CD8-positive, alpha-beta T cell (primary cell): ENCODE measurements at regions of chr19 and their contacts with region 1.

Region 1: DNA sequence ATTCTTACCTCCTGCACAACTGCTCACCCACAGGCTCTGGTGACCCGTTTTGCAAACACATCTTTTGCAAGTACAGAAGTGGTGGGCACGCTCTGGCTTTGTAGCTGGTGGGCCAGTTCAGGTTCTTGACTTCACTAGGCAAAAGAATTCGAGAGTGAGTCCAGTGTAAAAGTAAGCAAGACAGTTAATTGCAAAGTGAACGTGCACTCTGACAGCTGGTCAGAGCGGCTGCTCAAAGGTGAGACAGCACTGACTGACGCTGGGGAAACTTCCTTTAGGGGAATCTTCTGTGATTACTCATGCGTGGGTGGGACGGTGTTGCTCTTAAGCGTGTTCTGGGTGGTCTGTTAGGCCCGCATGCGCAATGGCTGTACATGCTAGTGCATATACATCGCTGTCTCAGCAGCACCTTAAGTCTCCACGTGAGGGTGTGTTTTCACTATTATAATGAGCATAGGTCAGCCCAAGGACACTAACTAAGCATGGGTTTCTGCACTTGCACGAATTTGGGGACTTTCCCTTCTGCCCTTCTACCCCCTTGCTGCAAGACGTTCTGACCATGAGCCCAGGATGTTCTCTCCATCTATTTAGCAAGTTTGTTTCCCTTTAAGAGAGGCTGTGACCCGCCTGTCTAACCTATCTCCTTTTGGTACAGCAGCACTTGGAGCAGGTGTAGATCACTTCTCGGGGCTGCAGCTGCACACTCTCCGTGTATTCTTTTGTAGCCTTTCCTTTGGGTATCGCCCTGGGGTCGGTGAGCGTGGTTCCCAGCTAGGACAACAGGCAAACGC is 30.2 kb upstream of the CD33 start:
- DNase-seq: peak in 2 of 9 experiments; percentile 18 to 51
- ATAC-seq: peak; percentile 99
- H3K4me3 ChIP-seq: no peak overlapping the region
- H3K4me3 Mint-ChIP-seq: peak overlapping the region; percentile 39
- H3K27ac ChIP-seq: no peak overlapping the region
- H3K27ac Mint-ChIP-seq: peak overlapping the region; percentile 73
- H3K4me1 ChIP-seq: no peaks in the 10 kb centered on the region
- H3K4me1 Mint-ChIP-seq: no peaks in the 10 kb centered on the region
- H3K27me3 ChIP-seq: no peaks in the 10 kb centered on the region
- H3K27me3 Mint-ChIP-seq: peaks cover 4% of the 10 kb centered on the region
- CTCF ChIP-seq: no peak

Region 2: GRCh38 chr19:51441410-51442390 is 247.0 kb after region 1 on chr19:
- CTCF ChIA-PET with region 1: no interaction called
- POLR2A ChIA-PET with region 1: no interaction called
- intact Hi-C with region 1: no loop called
- DNase-seq: peak; percentile 56 to 95 (median 81)
- ATAC-seq: peak; percentile 91
- H3K4me3 ChIP-seq: peak overlapping the region; percentile 21 to 32
- H3K4me3 Mint-ChIP-seq: peak overlapping the region; percentile 75
- H3K27ac ChIP-seq: peak overlapping the region; percentile 24 to 83
- H3K27ac Mint-ChIP-seq: peak overlapping the region; percentile 93
- H3K4me1 ChIP-seq: peaks cover 31% of the 10 kb centered on the region
- H3K4me1 Mint-ChIP-seq: peaks cover 43% of the 10 kb centered on the region
- H3K27me3 ChIP-seq: peaks cover 0 to 2% of the 10 kb centered on the region in 2 experiments
- H3K27me3 Mint-ChIP-seq: peaks cover 7% of the 10 kb centered on the region
- CTCF ChIP-seq: peak; percentile 27

Region 3: DNA sequence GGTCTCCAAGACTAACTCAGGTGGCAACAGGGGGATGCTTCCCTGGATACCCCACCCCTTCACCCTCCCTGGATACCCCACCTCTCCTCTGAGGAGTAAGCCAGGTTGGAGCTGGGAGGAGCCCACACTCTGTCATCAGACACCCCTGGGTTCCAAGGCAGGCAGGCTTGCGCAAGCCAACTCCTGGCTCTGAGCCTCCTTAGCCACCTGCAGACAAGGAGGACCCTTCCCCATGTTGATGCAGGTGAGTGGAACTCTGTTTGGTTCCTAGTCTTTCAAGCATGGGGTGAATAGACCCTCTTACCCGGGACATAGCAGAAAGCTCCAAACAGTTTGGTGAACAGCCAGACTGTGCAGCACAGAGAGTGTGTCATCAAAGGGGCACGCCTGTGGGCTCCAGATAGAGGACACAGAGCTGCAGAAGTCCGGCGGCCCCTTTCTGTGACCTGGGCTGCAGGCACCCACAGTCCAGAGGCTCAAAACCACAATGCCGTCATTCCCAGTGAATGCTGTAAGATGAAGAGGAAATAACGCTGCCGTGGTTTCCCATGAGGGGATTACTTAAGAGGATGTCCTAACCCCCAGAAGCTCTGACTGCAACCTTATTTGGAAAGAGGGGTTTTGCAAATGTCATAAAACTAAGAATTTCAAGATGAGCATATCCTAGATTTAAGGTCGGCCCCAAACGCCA is 541.2 kb after region 1 on chr19:
- CTCF ChIA-PET with region 1: no interaction called
- POLR2A ChIA-PET with region 1: no interaction called
- intact Hi-C with region 1: loop called in 1 of 2 experiments (anchors 10 kb)
- DNase-seq: peak in 1 of 9 experiments; percentile 43
- ATAC-seq: no peak
- H3K4me3 ChIP-seq: no peak overlapping the region
- H3K4me3 Mint-ChIP-seq: no peak overlapping the region
- H3K27ac ChIP-seq: no peak overlapping the region
- H3K27ac Mint-ChIP-seq: no peak overlapping the region
- H3K4me1 ChIP-seq: no peaks in the 10 kb centered on the region
- H3K4me1 Mint-ChIP-seq: no peaks in the 10 kb centered on the region
- H3K27me3 ChIP-seq: no peaks in the 10 kb centered on the region
- H3K27me3 Mint-ChIP-seq: peaks cover 23% of the 10 kb centered on the region
- CTCF ChIP-seq: no peak